Mammary epithelial cell (primary cell): ENCODE measurements at regions of chr1 and their contacts with region 1.

Region 1: GRCh38 chr1:18913065-18913835 is 10.9 kb upstream of the ALDH4A1 start:
- DNase-seq: peak; percentile 54
- H3K4me3 ChIP-seq: no peak overlapping the region
- H3K27ac ChIP-seq: no peak overlapping the region
- H3K4me1 ChIP-seq: no peaks in the 10 kb centered on the region
- H3K27me3 ChIP-seq: no peaks in the 10 kb centered on the region
- CTCF ChIP-seq: peak; percentile 92 to 98

Region 2: GRCh38 chr1:18883636-18884418 is 29.4 kb before region 1 on chr1:
- CTCF ChIA-PET with region 1: no interaction called
- dilution Hi-C with region 1: no loop called
- in situ Hi-C with region 1: no loop called
- intact Hi-C with region 1: loop called (anchors 1 kb)
- DNase-seq: peak; percentile 47
- H3K4me3 ChIP-seq: no peak overlapping the region
- H3K27ac ChIP-seq: no peak overlapping the region
- H3K4me1 ChIP-seq: peaks cover 29% of the 10 kb centered on the region
- H3K27me3 ChIP-seq: no peaks in the 10 kb centered on the region
- CTCF ChIP-seq: peak; percentile 93 to 95

Region 3: GRCh38 chr1:18972531-18972930 is 59.3 kb after region 1 on chr1:
- CTCF ChIA-PET with region 1: no interaction called
- dilution Hi-C with region 1: no loop called
- in situ Hi-C with region 1: no loop called
- intact Hi-C with region 1: loop called (anchors 1 kb)
- DNase-seq: peak; percentile 52
- H3K4me3 ChIP-seq: no peak overlapping the region
- H3K27ac ChIP-seq: no peak overlapping the region
- H3K4me1 ChIP-seq: peaks cover 4% of the 10 kb centered on the region
- H3K27me3 ChIP-seq: no peaks in the 10 kb centered on the region
- CTCF ChIP-seq: peak; percentile 18 to 51

Region 4: DNA sequence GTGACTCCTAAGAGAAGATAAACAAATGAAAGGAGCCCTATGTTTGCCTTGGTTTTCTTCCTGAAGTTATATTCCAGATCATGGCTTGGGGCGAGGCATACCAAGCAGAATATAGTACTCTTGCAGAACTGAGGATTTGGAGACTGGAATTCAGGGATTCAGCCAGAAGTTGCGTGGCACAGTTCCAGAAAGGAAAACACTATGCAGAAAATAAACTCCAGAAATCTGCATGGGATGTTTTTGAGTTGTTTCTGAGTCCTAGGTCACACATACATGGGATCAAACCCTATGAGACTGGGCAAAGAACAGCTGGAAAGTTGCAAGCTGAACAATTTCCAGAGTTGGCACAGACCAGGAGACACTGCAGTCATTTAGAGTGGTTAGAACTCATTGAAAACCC is 86.1 kb after region 1 on chr1:
- CTCF ChIA-PET with region 1: no interaction called
- dilution Hi-C with region 1: no loop called
- in situ Hi-C with region 1: no loop called
- intact Hi-C with region 1: loop called (anchors 1 kb)
- DNase-seq: no peak
- H3K4me3 ChIP-seq: no peak overlapping the region
- H3K27ac ChIP-seq: peak overlapping the region; percentile 70
- H3K4me1 ChIP-seq: peaks cover 25% of the 10 kb centered on the region
- H3K27me3 ChIP-seq: no peaks in the 10 kb centered on the region
- CTCF ChIP-seq: no peak